ENCODE measurements at regions of chr1 and their contacts with region 1.

Region 1: DNA sequence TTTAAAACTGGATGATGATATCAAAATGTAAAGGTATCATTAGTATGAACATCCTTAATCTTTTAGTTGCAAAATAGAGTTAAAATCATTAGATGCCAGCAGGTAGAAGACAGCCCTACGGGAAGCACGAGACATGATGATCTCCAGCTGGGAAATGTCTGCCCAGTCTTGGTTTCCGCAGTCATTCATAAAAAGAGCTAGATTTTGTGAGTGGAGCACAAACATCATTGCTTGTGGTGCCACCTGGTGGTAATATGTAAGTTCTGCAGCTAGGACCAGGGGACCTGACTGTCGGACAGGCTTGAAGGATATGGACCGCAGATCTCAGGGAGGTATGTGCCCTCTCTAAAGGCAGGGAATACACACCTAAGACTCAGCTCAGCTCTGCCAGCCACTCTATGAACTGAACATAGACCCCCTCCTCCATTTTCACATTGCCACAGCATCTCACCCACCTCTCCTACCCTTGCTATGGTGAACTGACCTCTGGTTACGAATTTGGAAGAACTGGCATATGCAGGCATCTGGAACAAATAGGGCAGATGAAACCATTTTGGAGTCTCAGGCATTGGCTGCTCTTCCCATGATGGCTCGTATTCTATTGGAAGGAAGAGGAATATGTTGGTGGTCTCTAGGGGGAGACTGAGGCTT is 9.2 kb downstream of the FCMR start:
- DNase-seq: peak; percentile 75
- H3K4me3 Mint-ChIP-seq: no peak overlapping the region
- H3K27ac Mint-ChIP-seq: peak overlapping the region; percentile 28
- H3K4me1 Mint-ChIP-seq: peaks cover 91% of the 10 kb centered on the region
- H3K27me3 Mint-ChIP-seq: no peaks in the 10 kb centered on the region

Region 2: DNA sequence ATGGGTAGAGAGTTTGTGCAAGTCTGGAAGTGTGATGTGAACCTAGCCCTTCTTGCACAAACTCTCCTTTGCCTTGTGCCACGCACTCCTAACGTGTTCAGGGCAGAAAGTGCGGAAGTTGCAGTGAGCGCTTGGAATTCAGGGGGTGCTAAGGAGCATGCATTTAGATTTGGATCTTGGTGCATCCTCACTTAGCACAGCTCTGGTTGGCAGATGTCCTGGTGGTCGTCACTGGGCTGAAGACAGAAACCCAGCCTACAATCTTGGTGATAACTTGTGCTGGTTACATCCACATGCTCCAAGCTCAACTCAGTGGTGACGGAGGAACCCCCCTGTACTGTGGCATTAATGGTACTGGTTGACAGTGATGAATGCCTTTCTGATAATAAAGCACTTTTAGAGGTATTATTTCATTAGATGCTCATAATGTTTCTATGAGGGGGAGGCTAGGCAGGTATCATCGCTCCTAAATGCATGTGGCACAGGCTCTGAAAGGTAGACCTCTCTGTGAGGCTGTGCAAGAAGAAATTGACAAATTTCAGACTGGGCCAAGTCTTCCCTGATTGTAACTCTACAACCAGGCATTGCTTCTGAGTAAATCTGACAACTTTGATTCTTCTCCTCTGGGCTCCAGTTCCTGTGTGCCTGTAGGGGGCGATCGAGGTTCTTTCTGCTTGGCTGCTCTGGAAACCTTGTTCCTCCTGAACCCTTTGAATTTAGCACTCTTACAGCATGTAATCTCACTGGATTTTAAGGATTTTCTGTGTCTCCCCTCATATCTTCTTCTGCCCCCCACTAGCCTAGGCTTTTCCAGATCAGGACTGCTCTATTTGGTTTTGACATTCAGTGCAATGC is 187.2 kb before region 1 on chr1:
- CTCF ChIA-PET with region 1: interaction called, 233 read pairs
- DNase-seq: peak; percentile 80
- H3K4me3 Mint-ChIP-seq: no peak overlapping the region
- H3K27ac Mint-ChIP-seq: no peak overlapping the region
- H3K4me1 Mint-ChIP-seq: peaks cover 26% of the 10 kb centered on the region
- H3K27me3 Mint-ChIP-seq: no peaks in the 10 kb centered on the region

Region 3: GRCh38 chr1:206784471-206784903 is 128.1 kb before region 1 on chr1:
- CTCF ChIA-PET with region 1: interaction called, 11 read pairs
- DNase-seq: peak; percentile 93
- H3K4me3 Mint-ChIP-seq: peak overlapping the region; percentile 51
- H3K27ac Mint-ChIP-seq: peak overlapping the region; percentile 84
- H3K4me1 Mint-ChIP-seq: peaks cover 62% of the 10 kb centered on the region
- H3K27me3 Mint-ChIP-seq: peaks cover 45% of the 10 kb centered on the region

Region 4: GRCh38 chr1:206816390-206817287 is 95.9 kb before region 1 on chr1:
- CTCF ChIA-PET with region 1: interaction called, 216 read pairs
- DNase-seq: peak; percentile 44
- H3K4me3 Mint-ChIP-seq: peak overlapping the region; percentile 8
- H3K27ac Mint-ChIP-seq: peak overlapping the region; percentile 93
- H3K4me1 Mint-ChIP-seq: peaks cover 40% of the 10 kb centered on the region
- H3K27me3 Mint-ChIP-seq: peaks cover 3% of the 10 kb centered on the region

Region 5: DNA sequence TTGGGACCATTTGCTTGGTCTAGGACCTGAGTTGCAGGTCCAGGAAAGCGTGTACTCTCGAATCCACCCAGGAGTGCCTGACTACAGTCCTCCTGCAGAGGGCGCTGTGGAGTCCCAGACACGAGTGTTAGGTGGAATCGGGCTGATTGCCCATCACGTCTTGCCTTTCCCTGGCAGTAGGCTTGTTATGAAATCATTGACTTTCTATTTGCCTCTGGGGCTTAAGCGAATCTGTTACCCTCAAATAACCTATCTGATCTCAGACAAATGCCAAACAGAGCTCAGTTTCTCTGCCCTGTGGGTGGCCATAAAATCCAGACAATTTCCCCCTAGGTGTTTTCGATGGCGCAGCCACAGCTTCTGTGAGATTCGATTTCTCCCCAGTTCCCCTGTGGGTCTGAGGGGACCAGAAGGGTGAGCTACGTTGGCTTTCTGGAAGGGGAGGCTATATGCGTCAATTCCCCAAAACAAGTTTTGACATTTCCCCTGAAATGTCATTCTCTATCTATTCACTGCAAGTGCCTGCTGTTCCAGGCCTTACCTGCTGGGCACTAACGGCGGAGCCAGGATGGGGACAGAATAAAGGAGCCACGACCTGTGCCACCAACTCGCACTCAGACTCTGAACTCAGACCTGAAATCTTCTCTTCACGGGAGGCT is 47.4 kb before region 1 on chr1 and contains the start of gene IL20:
- CTCF ChIA-PET with region 1: interaction called, 40 read pairs
- DNase-seq: peak; percentile 84
- H3K4me3 Mint-ChIP-seq: no peak within 1 kb of the TSS
- H3K27ac Mint-ChIP-seq: no peak within 1 kb of the TSS
- H3K4me1 Mint-ChIP-seq: peaks cover 7% of the 10 kb centered on the region
- H3K27me3 Mint-ChIP-seq: peaks cover 62% of the 10 kb centered on the region

Region 6: DNA sequence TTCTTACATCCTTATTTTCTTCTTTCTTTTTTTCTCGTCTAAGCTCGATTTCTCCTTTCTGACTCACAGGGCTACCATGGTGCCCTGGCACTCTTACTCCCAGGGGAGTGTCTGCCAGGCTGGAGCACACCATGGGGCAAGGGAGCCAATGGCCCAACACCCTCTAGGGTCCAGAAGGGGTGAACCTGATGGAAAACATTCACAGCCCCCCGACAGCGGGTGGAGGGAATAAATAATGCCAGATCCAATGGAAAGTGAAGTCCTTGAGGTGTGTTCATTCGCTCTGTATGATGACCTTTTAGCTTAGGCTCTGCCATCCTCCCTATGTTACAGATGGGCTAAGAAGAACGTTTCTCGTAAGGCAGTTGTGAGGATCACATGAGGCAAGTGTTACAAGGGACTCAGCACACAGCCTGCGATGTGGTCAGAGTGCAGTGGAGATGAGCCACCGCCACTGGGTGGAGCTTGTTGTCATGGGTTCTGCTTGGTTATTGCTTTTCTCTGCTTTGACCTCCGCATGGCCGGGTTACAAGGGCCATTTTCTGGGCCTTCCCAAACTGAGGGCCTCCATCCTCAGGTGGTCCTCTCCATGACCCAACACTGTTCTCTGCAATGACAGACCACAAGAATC is 12.7 kb after region 1 on chr1:
- CTCF ChIA-PET with region 1: interaction called, 168 read pairs
- DNase-seq: peak; percentile 67
- H3K4me3 Mint-ChIP-seq: no peak overlapping the region
- H3K27ac Mint-ChIP-seq: no peak overlapping the region
- H3K4me1 Mint-ChIP-seq: peaks cover 28% of the 10 kb centered on the region
- H3K27me3 Mint-ChIP-seq: no peaks in the 10 kb centered on the region

Region 7: DNA sequence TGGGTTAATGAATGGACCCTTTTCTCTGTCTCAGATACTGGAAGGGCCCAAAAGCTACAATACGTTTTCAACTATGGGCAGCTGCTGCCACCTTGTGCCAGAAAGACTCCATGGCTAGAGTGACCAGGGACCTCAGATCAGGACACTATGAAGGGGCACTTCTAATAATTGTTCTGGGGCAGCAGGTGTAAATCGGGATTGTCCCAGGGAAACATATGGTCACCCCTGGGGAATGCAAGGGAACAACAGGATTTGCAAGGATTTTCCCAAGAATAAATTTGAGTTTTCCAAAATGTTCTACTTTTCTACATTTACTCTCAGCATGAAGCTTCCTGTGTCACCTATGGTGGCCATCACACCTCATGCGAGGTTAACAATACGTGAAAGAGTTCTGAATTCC is 69.6 kb after region 1 on chr1:
- CTCF ChIA-PET with region 1: interaction called, 125 read pairs
- DNase-seq: peak; percentile 78
- H3K4me3 Mint-ChIP-seq: no peak overlapping the region
- H3K27ac Mint-ChIP-seq: no peak overlapping the region
- H3K4me1 Mint-ChIP-seq: no peaks in the 10 kb centered on the region
- H3K27me3 Mint-ChIP-seq: peaks cover 60% of the 10 kb centered on the region